Activated T-helper 1 cell treated with anti-CD3 and anti-CD28 coated beads, Interleukin-12 subunit alpha, Interleukin-12 subunit beta, Interleukin-2, Interleukin-4 antibody, amounts not matched to agents 30 ng/mL and 10 ng/mL and 1 ng/mL, durations not matched to agents 14 hours and 24 hours and 36 hours (primary cell): ENCODE measurements at regions of chr12 and their contacts with region 1.

Region 1: GRCh38 chr12:108691175-108691997 is 39.9 kb downstream of the CORO1C start:
- DNase-seq: peak; percentile 50
- H3K4me3 Mint-ChIP-seq: peak overlapping the region; percentile 74
- H3K27ac Mint-ChIP-seq: peak overlapping the region; percentile 95
- H3K4me1 Mint-ChIP-seq: peaks cover 64% of the 10 kb centered on the region
- H3K27me3 Mint-ChIP-seq: no peaks in the 10 kb centered on the region

Region 2: DNA sequence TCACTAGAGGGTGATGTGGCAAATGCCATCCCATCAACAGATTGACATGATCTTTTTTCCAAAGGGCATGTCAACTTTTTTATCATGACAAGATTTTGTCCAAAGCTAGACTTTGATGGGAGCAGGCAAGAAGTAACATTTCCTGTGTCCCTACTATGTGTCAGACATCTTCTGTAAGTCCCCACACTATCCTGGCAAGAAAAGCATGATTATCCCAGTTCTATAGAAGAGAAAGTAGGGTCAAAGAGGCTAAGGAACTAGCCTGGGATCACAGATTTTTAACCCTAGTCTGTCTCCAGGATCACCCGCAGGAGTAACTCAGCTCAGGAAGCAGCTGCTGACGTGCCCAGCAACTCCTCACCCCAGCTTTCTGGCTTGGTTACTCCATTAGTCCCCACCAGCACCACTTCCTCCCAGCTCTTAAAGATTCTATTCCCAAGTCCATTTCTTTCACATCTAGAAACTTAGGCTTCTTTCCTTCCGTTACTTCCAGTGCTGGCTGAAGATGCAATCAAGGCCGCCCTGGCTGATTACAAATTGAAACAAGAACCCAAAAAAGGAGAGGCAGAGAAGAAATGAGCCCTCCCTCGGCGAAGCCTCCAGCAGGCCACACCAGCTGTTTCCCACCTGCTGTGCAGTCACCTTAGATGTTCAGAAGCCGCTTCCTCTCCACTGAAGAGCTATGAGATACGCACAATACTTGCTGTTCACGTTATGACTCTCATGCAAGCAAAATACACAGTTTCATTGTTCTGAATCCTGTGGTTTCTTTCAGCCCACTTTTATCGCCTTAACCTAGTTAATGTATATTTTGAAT is 122.8 kb before region 1 on chr12:
- intact Hi-C with region 1: loop called (anchors 1 kb)
- DNase-seq: peak; percentile 76
- H3K4me3 Mint-ChIP-seq: peak overlapping the region; percentile 77
- H3K27ac Mint-ChIP-seq: peak overlapping the region; percentile 88
- H3K4me1 Mint-ChIP-seq: peaks cover 75% of the 10 kb centered on the region
- H3K27me3 Mint-ChIP-seq: no peaks in the 10 kb centered on the region

Region 3: DNA sequence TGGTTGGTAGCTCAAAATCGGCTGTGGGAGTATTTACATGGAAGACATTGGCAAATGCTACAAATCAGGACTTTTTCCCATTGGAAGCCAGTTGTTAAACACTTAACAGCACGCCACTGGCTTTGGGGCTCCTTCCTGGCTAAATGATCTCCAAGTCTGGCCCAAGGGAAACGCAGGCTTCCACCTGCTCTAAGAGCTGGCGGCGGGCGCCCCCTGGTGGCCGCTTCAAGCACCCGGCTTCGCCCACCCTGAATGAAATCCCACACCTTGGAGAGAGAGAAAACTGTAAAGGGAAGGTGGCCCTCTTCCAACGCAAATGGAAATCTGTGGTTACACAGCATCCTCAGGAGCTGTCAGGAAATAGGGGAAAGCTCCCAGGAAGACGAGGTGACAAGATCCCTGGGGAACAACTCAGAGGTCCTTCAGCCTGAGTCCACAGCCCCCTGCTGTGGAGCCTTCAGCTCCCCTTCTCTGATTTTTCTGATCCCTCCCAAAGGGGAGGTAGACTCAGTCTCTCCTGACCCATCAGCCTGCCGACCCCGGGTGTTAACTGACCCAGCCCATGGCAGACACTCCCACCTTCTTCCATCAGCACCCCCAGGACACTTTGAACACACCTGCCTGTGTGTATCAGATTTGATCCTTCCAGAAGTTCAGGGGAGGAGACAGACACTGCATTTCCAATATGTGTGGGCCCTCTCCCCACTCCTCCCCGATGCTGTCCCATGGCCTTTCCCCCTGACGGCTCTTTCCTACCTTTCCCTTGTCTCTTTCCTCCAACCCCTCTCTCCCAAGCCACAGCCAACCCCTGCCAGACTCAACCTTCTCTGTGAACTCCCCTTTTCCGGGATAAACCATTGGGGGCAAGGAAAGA is 73.1 kb before region 1 on chr12:
- intact Hi-C with region 1: loop called (anchors 5 kb)
- DNase-seq: peak; percentile 69
- H3K4me3 Mint-ChIP-seq: no peak overlapping the region
- H3K27ac Mint-ChIP-seq: peak overlapping the region; percentile 57
- H3K4me1 Mint-ChIP-seq: peaks cover 57% of the 10 kb centered on the region
- H3K27me3 Mint-ChIP-seq: peaks cover 2% of the 10 kb centered on the region

Region 4: GRCh38 chr12:108664338-108665258 is 26.8 kb before region 1 on chr12:
- intact Hi-C with region 1: loop called (anchors 1 kb)
- DNase-seq: peak; percentile 79
- H3K4me3 Mint-ChIP-seq: no peak overlapping the region
- H3K27ac Mint-ChIP-seq: peak overlapping the region; percentile 72
- H3K4me1 Mint-ChIP-seq: peaks cover 17% of the 10 kb centered on the region
- H3K27me3 Mint-ChIP-seq: no peaks in the 10 kb centered on the region

Region 5: DNA sequence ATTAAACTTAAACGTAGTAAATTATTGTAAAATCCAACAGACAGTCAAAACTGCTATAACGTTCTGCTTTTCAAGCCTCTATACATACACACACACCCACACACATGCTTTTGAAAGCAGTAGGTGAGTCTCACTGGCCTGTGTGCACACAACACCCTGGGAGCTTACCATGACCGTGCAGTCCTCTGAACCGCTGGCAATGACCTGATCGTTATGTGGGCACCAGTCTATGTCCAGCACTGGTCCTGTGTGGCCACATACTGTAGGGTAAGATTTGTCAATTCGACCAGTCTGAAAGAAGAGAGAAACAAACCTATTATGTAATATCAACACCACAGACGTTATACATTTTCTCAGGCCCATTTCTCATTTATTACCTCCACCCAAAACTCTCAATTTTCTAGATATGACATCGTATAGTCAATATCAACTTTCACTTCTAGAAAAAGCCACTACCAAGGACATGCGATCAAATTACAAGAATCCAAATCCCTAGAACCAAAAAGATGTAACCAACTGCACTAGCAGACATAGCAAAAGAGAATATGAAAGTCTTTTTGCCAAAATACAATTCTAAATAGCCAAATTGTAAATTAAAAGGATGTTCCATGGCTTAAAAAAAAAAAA is 13.2 kb before region 1 on chr12:
- intact Hi-C with region 1: no loop called
- DNase-seq: no peak
- H3K4me3 Mint-ChIP-seq: no peak overlapping the region
- H3K27ac Mint-ChIP-seq: no peak overlapping the region
- H3K4me1 Mint-ChIP-seq: no peaks in the 10 kb centered on the region
- H3K27me3 Mint-ChIP-seq: no peaks in the 10 kb centered on the region

Region 6: DNA sequence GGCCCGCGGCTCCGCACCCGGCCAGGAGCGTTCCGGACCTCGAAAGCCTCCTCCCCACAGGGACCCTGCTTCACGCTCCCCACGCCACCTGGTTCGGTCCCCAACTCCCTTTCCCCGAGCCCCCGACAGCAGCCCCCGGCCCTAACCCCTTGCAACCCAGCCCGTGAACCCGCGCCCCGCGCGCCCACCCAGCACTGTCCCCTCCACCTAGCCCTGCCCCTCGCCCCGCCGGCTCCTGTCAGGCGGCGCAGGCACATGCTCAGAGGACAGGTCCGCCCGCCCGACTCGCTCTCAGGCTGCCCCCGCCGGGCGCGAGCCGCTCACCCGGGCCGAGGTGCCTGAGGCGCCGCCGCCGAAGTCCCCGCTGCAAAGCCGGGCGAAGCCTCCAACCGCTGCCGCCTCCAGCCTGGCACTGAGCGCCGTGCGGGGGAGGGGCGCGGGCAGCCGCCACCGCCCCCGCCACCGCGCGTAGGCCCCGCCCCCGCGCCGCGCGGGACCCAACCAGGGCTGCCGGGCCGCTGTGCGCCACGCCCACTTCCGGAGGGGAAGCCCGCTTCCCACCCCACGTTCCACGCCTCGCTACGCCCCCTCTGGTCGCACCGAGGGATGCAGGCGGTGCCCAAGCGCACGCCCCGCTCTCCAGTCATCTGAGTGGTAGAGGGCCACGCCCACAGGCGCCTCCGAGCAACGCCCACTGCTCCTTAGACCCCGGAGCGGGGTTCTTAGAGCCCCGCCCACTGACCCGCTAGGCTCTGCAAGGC is 39.9 kb after region 1 on chr12 and contains the start of gene CORO1C:
- intact Hi-C with region 1: loop called (anchors 1 kb)
- DNase-seq: peak; percentile 96
- H3K4me3 Mint-ChIP-seq: peak within 1 kb of the TSS; percentile 89
- H3K27ac Mint-ChIP-seq: peak within 1 kb of the TSS; percentile 94
- H3K4me1 Mint-ChIP-seq: peaks cover 38% of the 10 kb centered on the region
- H3K27me3 Mint-ChIP-seq: peaks cover 16% of the 10 kb centered on the region
- total RNA-seq, gene CORO1C: 46.1 and 49.7 TPM in 2 replicates

Region 7: DNA sequence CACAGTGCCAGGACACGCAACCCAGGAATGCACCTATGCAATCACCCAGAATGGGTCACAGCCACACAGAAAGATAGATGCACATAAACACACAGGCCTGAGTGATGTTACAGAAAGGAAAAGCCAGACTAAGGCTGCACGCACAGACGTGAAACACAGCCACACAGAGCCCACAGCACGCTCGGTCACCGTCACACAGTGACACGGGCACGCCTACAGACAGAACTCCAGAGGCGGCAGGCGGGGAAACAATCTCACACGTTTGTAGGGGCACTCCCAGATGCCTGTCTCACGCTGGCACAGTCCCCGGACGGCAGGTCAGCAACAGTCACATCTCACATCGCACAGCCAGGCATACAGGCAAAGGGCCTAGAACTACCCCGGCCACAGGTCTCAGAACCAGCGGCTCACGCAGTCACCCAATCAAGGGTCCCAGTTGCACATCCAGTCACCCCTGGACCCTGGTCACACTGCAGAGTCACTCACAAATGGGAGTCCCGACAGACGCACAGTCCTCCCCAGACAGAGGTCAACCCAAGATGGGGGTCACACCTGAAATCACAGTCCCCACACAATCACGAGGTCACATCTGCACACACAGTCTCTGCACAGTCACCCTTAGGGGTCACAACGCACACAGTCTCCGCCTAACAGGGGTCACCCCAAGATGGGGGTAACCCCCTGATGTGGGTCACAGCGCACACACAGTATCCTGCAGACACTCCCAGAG is 165.2 kb after region 1 on chr12:
- intact Hi-C with region 1: loop called (anchors 2 kb)
- DNase-seq: peak; percentile 45
- H3K4me3 Mint-ChIP-seq: peak overlapping the region; percentile 96
- H3K27ac Mint-ChIP-seq: peak overlapping the region; percentile 96
- H3K4me1 Mint-ChIP-seq: peaks cover 52% of the 10 kb centered on the region
- H3K27me3 Mint-ChIP-seq: peaks cover 10% of the 10 kb centered on the region